ENCODE measurements at regions of chr6 and their contacts with region 1.

Region 1: DNA sequence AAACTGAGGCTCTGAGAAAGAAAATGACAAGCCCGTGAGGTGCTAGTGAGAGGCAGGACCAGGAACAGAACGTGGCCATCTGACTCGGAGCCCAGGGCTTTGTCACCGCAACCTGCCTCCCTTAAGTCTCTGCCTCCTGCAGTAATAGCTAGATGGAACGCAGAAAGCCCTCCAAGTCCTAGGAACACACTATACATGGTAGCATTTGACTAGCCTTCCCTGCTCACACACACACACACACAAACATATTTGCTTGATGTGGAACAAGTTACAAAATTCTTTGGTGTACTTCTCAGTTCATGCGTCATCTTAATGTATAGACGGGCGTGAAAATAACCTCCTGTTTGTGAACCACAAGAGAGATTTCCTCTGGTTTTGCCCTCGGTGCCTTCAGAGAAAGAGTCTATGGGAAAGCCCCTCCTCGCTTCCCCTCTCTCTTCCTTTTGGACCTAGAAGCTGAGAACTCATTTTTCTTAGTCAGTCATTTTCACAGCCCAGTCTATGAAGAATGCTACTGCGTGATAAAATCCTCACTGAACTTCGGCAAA is 38.8 kb downstream of the C6orf52 start:
- DNase-seq: peak; percentile 43
- H3K4me3 Mint-ChIP-seq: peak overlapping the region; percentile 62
- H3K27ac Mint-ChIP-seq: peak overlapping the region; percentile 46
- H3K4me1 Mint-ChIP-seq: peaks cover 19% of the 10 kb centered on the region
- H3K27me3 Mint-ChIP-seq: no peaks in the 10 kb centered on the region

Region 2: GRCh38 chr6:10528170-10528981 is 127.2 kb before region 1 on chr6:
- intact Hi-C with region 1: loop called (anchors 1 kb)
- DNase-seq: peak; percentile 41
- H3K4me3 Mint-ChIP-seq: peak overlapping the region; percentile 87
- H3K27ac Mint-ChIP-seq: peak overlapping the region; percentile 64
- H3K4me1 Mint-ChIP-seq: peaks cover 48% of the 10 kb centered on the region
- H3K27me3 Mint-ChIP-seq: peaks cover 5% of the 10 kb centered on the region

Region 3: DNA sequence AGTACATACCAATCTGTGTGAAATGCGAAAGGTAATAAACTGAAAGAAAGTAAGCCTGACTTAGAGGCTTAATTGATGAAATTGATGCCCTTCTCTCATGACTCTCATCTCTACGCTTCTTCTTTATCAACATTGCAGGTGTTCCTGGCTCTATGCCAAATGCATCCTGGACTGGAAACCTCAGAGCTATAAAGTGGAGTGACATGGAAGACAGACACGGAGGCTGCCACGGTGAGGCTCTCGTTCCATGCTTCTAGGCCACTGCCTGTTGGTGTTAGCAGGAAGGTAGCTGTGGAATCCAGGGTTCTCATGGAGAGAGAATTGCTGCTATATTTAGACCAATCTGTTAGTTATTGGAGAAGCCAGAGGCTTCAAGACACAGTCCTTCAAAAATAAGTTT is 34.4 kb before region 1 on chr6:
- intact Hi-C with region 1: no loop called
- DNase-seq: no peak
- H3K4me3 Mint-ChIP-seq: no peak overlapping the region
- H3K27ac Mint-ChIP-seq: no peak overlapping the region
- H3K4me1 Mint-ChIP-seq: no peaks in the 10 kb centered on the region
- H3K27me3 Mint-ChIP-seq: no peaks in the 10 kb centered on the region

Region 4: GRCh38 chr6:10633216-10633615 is 22.4 kb before region 1 on chr6:
- intact Hi-C with region 1: no loop called
- DNase-seq: no peak
- H3K4me3 Mint-ChIP-seq: no peak overlapping the region
- H3K27ac Mint-ChIP-seq: peak overlapping the region; percentile 6
- H3K4me1 Mint-ChIP-seq: peaks cover 13% of the 10 kb centered on the region
- H3K27me3 Mint-ChIP-seq: peaks cover 4% of the 10 kb centered on the region

Region 5: DNA sequence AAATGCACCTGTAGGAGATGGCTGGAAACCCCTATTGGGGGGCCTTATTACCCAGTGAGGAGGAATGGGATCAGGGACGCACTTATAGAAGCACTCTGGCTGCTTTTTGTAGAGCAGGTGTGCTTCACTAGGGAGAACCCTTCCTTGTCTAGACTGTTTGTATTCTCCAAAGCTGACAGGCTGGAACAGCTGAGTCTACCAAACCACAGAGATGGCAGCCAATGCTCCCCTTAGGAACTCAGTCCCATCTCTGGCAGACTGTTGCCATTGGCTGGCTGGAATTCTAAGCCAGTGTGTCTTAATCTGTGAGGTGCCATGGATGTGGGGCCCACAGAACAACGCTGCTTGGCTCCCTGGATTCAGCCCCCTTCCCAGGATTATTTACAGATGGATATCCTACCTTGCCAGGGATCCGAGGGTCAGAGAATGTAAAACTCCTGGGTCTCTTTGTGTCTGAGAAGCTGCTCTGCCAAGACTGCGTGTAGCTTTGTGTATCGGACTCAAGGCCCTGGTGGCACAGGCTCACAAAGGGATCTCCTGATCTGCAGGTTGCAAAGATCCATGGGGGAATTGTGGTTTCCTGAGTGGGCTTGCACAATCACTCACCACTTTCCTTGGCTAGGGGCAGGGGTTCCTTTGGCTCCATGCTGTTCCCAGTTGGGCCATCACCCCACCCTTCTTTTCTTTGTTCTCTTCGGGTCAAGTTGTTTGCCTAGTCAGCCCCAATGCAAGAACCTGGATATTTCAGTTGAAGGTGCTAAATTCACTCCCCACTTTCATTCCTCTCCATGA is 12.7 kb after region 1 on chr6:
- intact Hi-C with region 1: loop called (anchors 1 kb)
- DNase-seq: no peak
- H3K4me3 Mint-ChIP-seq: no peak overlapping the region
- H3K27ac Mint-ChIP-seq: peak overlapping the region; percentile 34
- H3K4me1 Mint-ChIP-seq: peaks cover 7% of the 10 kb centered on the region
- H3K27me3 Mint-ChIP-seq: peaks cover 15% of the 10 kb centered on the region

Region 6: GRCh38 chr6:10685092-10685915 is 29.7 kb after region 1 on chr6:
- intact Hi-C with region 1: loop called (anchors 2 kb)
- DNase-seq: no peak
- H3K4me3 Mint-ChIP-seq: no peak overlapping the region
- H3K27ac Mint-ChIP-seq: peak overlapping the region; percentile 18
- H3K4me1 Mint-ChIP-seq: peaks cover 45% of the 10 kb centered on the region
- H3K27me3 Mint-ChIP-seq: peaks cover 1% of the 10 kb centered on the region

Region 7: GRCh38 chr6:10722820-10723566 is 67.4 kb after region 1 on chr6 and contains the start of gene TMEM14C:
- intact Hi-C with region 1: loop called (anchors 1 kb)
- DNase-seq: peak; percentile 88
- H3K4me3 Mint-ChIP-seq: peak within 1 kb of the TSS; percentile 91
- H3K27ac Mint-ChIP-seq: peak within 1 kb of the TSS; percentile 93
- H3K4me1 Mint-ChIP-seq: peaks cover 55% of the 10 kb centered on the region
- H3K27me3 Mint-ChIP-seq: no peaks in the 10 kb centered on the region
- total RNA-seq, gene TMEM14C: 57.3 and 63.1 TPM in 2 replicates